ENCODE measurements at regions of chr17 and their contacts with region 1.

Region 1: GRCh38 chr17:10156948-10157607 is 41.3 kb downstream of the GAS7 start:
- DNase-seq: peak; percentile 47
- ATAC-seq: peak; percentile 79
- H3K4me3 Mint-ChIP-seq: peak overlapping the region; percentile 33
- H3K27ac Mint-ChIP-seq: peak overlapping the region; percentile 90
- H3K4me1 Mint-ChIP-seq: peaks cover 32% of the 10 kb centered on the region
- H3K27me3 Mint-ChIP-seq: no peaks in the 10 kb centered on the region
- CTCF ChIP-seq: no peak

Region 2: GRCh38 chr17:9971991-9972599 is 185.0 kb before region 1 on chr17:
- CTCF ChIA-PET with region 1: no interaction called
- POLR2A ChIA-PET with region 1: no interaction called
- intact Hi-C with region 1: loop called (anchors 5 kb)
- DNase-seq: no peak
- ATAC-seq: no peak
- H3K4me3 Mint-ChIP-seq: no peak overlapping the region
- H3K27ac Mint-ChIP-seq: no peak overlapping the region
- H3K4me1 Mint-ChIP-seq: peaks cover under 1% of the 10 kb centered on the region
- H3K27me3 Mint-ChIP-seq: no peaks in the 10 kb centered on the region
- CTCF ChIP-seq: no peak

Region 3: DNA sequence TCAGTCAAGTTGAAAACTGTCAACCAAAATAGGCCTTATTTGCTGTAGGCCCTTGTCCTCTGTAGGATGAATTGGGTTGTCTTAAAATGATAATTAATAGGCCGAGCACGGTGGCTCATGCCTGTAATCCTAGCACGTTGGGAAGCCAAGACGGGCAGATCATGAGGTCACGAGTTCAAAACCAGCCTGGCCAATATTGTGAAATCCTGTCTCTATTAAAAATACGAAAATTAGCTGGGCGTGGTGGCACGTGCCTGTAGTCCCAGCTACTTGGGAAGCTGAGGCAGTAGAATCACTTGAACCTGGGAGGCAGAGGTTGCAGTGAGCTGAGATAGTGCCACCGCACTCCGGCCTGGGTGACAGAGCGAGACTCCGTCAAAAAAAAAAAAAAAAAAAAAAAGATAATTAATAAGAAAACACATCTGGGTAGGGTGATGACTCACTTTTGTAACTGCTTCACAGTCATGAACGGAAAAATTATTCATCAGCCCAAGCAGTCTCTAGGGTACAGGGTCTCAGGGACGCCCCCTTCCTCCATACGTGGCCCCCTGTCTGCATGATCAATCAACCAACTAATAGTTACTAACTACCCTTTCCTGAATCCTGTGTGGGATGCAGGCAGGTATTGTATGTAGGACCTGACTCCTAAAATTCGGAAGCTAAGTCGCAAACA is 115.0 kb before region 1 on chr17:
- CTCF ChIA-PET with region 1: no interaction called
- POLR2A ChIA-PET with region 1: interaction called, 4 read pairs
- intact Hi-C with region 1: loop called (anchors 2 kb)
- DNase-seq: no peak
- ATAC-seq: peak; percentile 72
- H3K4me3 Mint-ChIP-seq: peak overlapping the region; percentile 30
- H3K27ac Mint-ChIP-seq: peak overlapping the region; percentile 84
- H3K4me1 Mint-ChIP-seq: peaks cover 55% of the 10 kb centered on the region
- H3K27me3 Mint-ChIP-seq: no peaks in the 10 kb centered on the region
- CTCF ChIP-seq: no peak

Region 4: GRCh38 chr17:10251212-10251948 is 94.3 kb after region 1 on chr17:
- CTCF ChIA-PET with region 1: no interaction called
- POLR2A ChIA-PET with region 1: no interaction called
- intact Hi-C with region 1: no loop called
- DNase-seq: no peak
- ATAC-seq: peak; percentile 62
- H3K4me3 Mint-ChIP-seq: no peak overlapping the region
- H3K27ac Mint-ChIP-seq: no peak overlapping the region
- H3K4me1 Mint-ChIP-seq: peaks cover 12% of the 10 kb centered on the region
- H3K27me3 Mint-ChIP-seq: no peaks in the 10 kb centered on the region
- CTCF ChIP-seq: no peak